ENCODE measurements at regions of chr14 and their contacts with region 1.

Region 1: DNA sequence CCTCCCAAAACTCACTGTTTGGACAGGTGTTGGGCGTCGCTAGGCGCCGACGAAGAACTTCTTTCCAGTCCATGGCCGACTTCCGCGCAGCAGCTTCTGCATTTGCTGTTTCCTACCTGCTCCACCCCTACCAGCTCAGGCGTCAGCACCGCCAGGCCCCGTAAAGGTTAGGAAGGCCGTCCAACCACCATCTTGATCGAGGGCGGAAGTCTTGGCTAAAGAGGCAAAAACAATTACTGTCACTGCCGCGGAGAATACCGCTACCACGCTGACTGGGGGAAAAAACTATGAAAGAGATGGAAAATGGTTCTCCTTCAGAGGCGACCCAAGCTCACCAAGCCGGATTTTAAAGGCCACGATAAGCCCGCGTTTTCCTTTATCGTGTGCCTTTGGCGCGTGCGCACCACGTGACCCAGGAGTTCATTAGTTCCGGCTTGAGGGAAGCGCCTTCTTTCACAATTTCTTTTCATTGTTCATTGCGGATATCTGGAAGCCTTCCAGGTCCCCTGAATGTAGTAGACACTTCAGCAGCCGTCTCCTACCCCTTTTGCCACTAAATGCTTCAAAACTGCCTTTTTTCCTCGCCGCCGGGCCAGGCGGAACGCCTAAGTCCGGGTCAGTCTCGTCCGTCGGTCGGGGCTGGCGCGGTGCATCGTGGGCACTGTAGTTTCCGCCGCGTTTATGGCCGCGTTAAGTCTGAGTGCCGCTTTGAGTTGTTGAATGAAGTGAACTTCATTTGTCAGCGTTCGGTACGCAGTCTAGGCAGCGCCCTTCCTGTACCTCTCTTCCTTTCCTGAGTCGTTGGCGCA is at the starts of genes PPP2R3C and PRORP:
- DNase-seq: peak; percentile 98
- ATAC-seq: peak; percentile 94
- H3K4me3 ChIP-seq: peak within 1 kb of the TSS; percentile 82 to 97 (median 86)
- H3K27ac ChIP-seq: peak within 1 kb of the TSS; percentile 91
- H3K4me1 ChIP-seq: peaks cover 67% of the 10 kb centered on the region
- H3K27me3 ChIP-seq: peaks cover 0 to 5% of the 10 kb centered on the region in 2 experiments; a peak in 2 of 5 replicates
- CTCF ChIP-seq: peak; percentile 37
- EP300 ChIP-seq: peak; percentile 47 to 82
- POLR2A ChIP-seq: peak; percentile 90 to 96
- RAD21 ChIP-seq: no peak
- total RNA-seq, gene PPP2R3C: 102 and 140 TPM in 2 replicates
- total RNA-seq, gene PRORP: 88.7 and 131 TPM in 2 replicates

Region 2: GRCh38 chr14:34678306-34678705 is 443.8 kb before region 1 on chr14:
- CTCF ChIA-PET with region 1: no interaction called
- POLR2A ChIA-PET with region 1: no interaction called
- in situ Hi-C with region 1: no loop called
- intact Hi-C with region 1: loop called (anchors 10 kb)
- DNase-seq: no peak
- ATAC-seq: no peak
- H3K4me3 ChIP-seq: no peak overlapping the region
- H3K27ac ChIP-seq: no peak overlapping the region
- H3K4me1 ChIP-seq: peaks cover 35% of the 10 kb centered on the region
- H3K27me3 ChIP-seq: peaks cover 0 to 2% of the 10 kb centered on the region in 2 experiments; a peak in 3 of 5 replicates
- CTCF ChIP-seq: no peak
- EP300 ChIP-seq: no peak
- POLR2A ChIP-seq: no peak
- RAD21 ChIP-seq: no peak

Region 3: DNA sequence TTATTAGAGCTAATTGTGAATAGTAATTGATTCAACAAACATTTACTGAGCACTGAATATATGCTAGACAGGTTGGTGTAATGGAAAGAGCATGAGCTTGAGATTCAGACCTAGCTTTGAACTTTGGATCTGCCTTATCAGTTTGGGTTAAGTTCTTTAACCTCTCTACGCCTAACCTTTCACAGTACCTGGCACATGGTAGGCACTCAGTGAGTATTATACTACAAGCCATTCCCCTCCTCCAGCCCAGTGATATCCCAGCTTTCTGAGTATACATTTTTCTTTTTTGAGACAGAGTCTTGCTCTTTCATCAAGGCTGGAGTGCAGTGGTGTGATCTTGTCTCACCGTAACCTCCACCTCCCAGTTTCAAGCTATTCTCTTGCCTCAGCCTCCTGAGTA is 44.0 kb before region 1 on chr14:
- CTCF ChIA-PET with region 1: no interaction called
- POLR2A ChIA-PET with region 1: interaction called, 10 read pairs
- in situ Hi-C with region 1: no loop called
- intact Hi-C with region 1: no loop called
- DNase-seq: peak; percentile 83
- ATAC-seq: peak; percentile 94
- H3K4me3 ChIP-seq: no peak overlapping the region
- H3K27ac ChIP-seq: no peak overlapping the region
- H3K4me1 ChIP-seq: peaks cover 13% of the 10 kb centered on the region
- H3K27me3 ChIP-seq: no peaks in the 10 kb centered on the region
- CTCF ChIP-seq: no peak
- EP300 ChIP-seq: peak in 1 of 2 experiments; percentile 47; a peak in 1 of 4 replicates
- POLR2A ChIP-seq: no peak
- RAD21 ChIP-seq: 0 out of 2 replicates have a peak, but pooled peaks have one; percentile 18

Region 4: DNA sequence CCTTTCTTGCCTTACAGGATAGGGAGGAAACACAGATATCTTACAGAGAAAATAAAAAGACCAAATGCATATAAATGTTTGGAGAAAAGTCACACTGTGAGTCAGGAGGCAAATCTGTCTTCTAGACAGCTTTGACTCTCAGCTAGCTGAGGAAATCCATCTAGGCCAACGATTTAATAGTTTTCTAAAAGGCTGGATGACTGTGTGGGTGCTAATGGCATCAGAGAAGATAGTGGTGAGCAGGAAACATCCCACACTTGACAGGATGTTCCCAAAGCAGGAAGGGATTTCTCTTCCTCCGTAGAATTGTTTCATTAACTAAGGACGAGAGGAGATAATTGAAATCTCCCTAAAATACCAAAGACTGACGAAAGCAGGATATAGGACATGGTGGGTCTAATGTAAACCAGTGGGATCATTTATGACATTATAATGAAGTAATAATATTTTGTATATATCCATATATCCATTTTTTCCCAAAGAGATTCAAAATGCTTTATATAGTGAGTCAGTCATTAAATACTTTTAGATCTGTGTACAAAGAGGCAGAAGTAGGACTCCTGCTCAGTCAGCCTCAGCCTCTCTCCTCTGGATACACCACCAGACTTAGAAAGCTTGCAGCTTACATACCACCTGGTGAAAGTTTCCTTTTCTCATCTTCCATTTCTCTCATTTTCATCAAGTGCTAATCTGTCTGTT is 125.8 kb after region 1 on chr14:
- CTCF ChIA-PET with region 1: no interaction called
- POLR2A ChIA-PET with region 1: no interaction called
- in situ Hi-C with region 1: no loop called
- intact Hi-C with region 1: no loop called
- DNase-seq: no peak
- ATAC-seq: no peak; the same call in 2 of the 3 replicates
- H3K4me3 ChIP-seq: no peak overlapping the region
- H3K27ac ChIP-seq: no peak overlapping the region
- H3K4me1 ChIP-seq: no peaks in the 10 kb centered on the region
- H3K27me3 ChIP-seq: no peaks in the 10 kb centered on the region
- CTCF ChIP-seq: no peak
- EP300 ChIP-seq: no peak
- POLR2A ChIP-seq: no peak
- RAD21 ChIP-seq: no peak

Region 5: DNA sequence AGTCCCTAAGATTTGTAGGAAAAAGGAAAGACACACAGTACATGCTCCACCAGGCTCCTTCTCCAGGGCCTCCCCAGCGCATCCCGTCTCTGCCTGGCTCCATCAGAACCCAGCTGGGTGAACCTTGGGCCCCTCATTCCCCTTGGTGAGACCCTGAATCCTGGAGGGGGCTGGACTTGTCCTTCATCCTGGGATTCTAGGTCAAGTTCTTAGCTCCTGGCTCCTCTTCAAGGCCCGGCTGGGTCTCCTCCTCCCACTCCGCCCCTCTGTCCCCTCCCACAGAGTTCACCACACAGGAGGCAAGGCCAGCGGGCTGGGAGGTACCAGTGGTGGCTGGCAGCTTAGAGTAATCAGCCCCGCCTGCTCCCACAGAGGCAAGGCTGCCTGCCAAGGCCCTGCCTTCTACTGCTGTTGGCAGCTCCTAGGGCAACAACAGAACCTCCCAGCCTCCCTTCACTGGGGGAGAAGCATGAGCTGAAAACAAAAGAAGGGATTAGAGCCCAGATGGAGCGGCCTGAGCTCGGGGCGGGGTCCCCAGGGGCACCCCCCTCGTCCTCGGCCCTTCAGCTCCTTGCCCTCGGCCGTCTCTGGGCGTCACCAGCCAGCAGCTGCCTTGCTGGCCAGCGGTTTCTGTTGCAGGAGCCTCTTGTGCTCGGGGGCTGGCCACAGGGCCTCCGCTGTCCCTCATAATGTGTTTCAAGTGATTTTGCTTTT is 219.5 kb after region 1 on chr14:
- CTCF ChIA-PET with region 1: no interaction called
- POLR2A ChIA-PET with region 1: interaction called, 11 read pairs
- in situ Hi-C with region 1: no loop called
- intact Hi-C with region 1: no loop called
- DNase-seq: peak; percentile 91
- ATAC-seq: peak; percentile 85
- H3K4me3 ChIP-seq: peak overlapping the region; percentile 63 to 78 (median 64)
- H3K27ac ChIP-seq: no peak overlapping the region
- H3K4me1 ChIP-seq: peaks cover 90% of the 10 kb centered on the region
- H3K27me3 ChIP-seq: peaks cover 0 to 3% of the 10 kb centered on the region in 2 experiments; a peak in 2 of 5 replicates
- CTCF ChIP-seq: no peak; the same call in 1 of the 2 replicates
- EP300 ChIP-seq: no peak; a peak in 1 of 4 replicates
- POLR2A ChIP-seq: peak in 1 of 2 experiments; percentile 62; a peak in 2 of 4 replicates
- RAD21 ChIP-seq: 0 out of 2 replicates have a peak, but pooled peaks have one; percentile 31

Region 6: GRCh38 chr14:35808076-35808652 is 686.1 kb after region 1 on chr14:
- CTCF ChIA-PET with region 1: no interaction called
- POLR2A ChIA-PET with region 1: no interaction called
- in situ Hi-C with region 1: loop called (anchors 25 kb)
- intact Hi-C with region 1: loop called (anchors 10 kb)
- DNase-seq: no peak
- ATAC-seq: no peak
- H3K4me3 ChIP-seq: peak overlapping the region; percentile 85 to 96 (median 86)
- H3K27ac ChIP-seq: peak overlapping the region; percentile 89
- H3K4me1 ChIP-seq: peaks cover 58% of the 10 kb centered on the region
- H3K27me3 ChIP-seq: no peaks in the 10 kb centered on the region; a peak in 1 of 5 replicates
- CTCF ChIP-seq: no peak
- EP300 ChIP-seq: no peak
- POLR2A ChIP-seq: no peak; a peak in 1 of 4 replicates
- RAD21 ChIP-seq: 0 out of 2 replicates have a peak, but pooled peaks have one; percentile 15

Measured in HepG2 (cell line).